MCF 10A (cell line): ENCODE measurements at regions of chr14 and their contacts with region 1.

Region 1: GRCh38 chr14:28751467-28752058 is 15.0 kb upstream of the FOXG1 start:
- DNase-seq: peak; percentile 73
- H3K4me3 Mint-ChIP-seq: no peak overlapping the region
- H3K27ac Mint-ChIP-seq: no peak overlapping the region
- H3K4me1 Mint-ChIP-seq: peaks cover 13% of the 10 kb centered on the region
- H3K27me3 Mint-ChIP-seq: peaks cover 26% of the 10 kb centered on the region
- CTCF ChIP-seq: peak; percentile 46

Region 2: DNA sequence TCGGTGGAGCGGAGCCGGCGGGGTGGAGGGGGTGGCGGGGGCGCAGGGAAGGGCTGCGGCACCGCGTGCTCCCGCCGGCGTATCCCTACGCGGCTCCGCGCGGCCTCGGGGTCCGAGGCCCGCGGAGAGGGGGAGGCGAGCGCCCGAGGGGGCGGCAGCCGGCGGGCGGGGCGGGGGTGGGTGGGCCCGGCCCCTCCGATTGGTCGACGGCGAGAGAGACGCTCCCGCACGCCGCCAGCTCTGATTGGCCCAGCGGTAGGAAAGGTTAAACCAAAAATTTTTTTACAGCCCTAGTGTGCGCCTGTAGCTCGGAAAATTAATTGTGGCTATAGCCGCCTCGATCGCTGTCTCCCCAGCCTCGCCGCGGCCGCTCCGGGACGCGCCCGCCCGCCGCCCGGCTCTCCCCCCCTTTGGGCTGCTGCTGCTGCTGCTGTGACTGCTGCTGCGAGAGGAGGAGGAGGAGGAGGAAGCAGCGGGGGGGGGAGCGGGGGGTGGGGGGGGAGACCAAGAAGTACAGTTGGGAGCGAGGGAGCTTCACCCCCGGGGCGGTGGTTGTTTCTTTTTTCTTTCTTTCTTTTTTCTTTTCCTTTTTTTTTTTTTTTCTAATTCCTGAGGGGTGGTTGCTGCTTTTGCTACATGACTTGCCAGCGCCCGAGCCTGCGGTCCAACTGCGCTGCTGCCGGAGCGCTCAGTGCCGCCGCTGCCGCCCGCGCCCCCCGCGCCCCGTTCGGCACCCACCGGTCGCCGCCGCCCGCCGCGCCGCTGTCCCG is 15.1 kb after region 1 on chr14 and contains the start of gene FOXG1:
- CTCF ChIA-PET with region 1: interaction called, 35 read pairs
- POLR2A ChIA-PET with region 1: no interaction called
- intact Hi-C with region 1: no loop called
- DNase-seq: no peak
- H3K4me3 Mint-ChIP-seq: no peak within 1 kb of the TSS
- H3K27ac Mint-ChIP-seq: no peak within 1 kb of the TSS
- H3K4me1 Mint-ChIP-seq: no peaks in the 10 kb centered on the region
- H3K27me3 Mint-ChIP-seq: peaks cover 83% of the 10 kb centered on the region
- CTCF ChIP-seq: no peak
- total RNA-seq, gene FOXG1: not detected in 2 replicates

Region 3: GRCh38 chr14:29521526-29522137 is 770.1 kb after region 1 on chr14:
- CTCF ChIA-PET with region 1: interaction called, 8 read pairs
- POLR2A ChIA-PET with region 1: no interaction called
- intact Hi-C with region 1: loop called (anchors 1 kb)
- DNase-seq: peak; percentile 37
- H3K4me3 Mint-ChIP-seq: no peak overlapping the region
- H3K27ac Mint-ChIP-seq: no peak overlapping the region
- H3K4me1 Mint-ChIP-seq: no peaks in the 10 kb centered on the region
- H3K27me3 Mint-ChIP-seq: peaks cover 44% of the 10 kb centered on the region
- CTCF ChIP-seq: peak; percentile 40

Region 4: DNA sequence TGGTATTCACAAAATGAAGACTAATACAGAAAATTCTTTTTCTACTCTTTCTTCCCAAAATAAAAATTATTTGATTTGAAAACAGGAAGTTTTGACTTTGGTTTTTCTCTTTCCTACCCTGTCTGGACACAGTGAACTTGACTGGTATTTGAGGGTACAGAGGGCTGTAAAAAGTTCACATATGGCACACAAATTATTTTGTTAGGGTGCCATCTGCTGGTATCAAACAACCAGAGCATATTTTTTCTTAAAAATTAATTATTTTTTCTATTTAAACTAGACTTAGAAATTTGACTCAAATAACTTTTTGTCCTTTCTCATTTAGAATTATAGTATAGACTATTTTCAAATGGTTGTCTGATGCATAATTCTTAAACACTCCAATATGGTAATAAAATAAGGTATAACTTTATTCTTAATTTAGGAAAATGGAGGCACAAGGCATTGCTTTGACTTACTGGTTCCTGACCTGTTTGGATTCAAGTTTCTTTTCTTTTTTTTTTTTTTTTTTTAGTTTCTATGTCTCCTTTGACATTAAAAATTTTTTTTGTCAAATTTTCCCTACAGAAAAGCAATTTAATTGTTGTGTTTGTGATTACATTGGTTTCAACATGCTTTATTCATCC is 785.4 kb after region 1 on chr14:
- CTCF ChIA-PET with region 1: interaction called, 123 read pairs
- POLR2A ChIA-PET with region 1: no interaction called
- intact Hi-C with region 1: loop called (anchors 1 kb)
- DNase-seq: peak; percentile 26
- H3K4me3 Mint-ChIP-seq: no peak overlapping the region
- H3K27ac Mint-ChIP-seq: no peak overlapping the region
- H3K4me1 Mint-ChIP-seq: no peaks in the 10 kb centered on the region
- H3K27me3 Mint-ChIP-seq: peaks cover 44% of the 10 kb centered on the region
- CTCF ChIP-seq: peak; percentile 44

Region 5: GRCh38 chr14:29569194-29569593 is 817.6 kb after region 1 on chr14:
- CTCF ChIA-PET with region 1: no interaction called
- POLR2A ChIA-PET with region 1: no interaction called
- intact Hi-C with region 1: no loop called
- DNase-seq: no peak
- H3K4me3 Mint-ChIP-seq: no peak overlapping the region
- H3K27ac Mint-ChIP-seq: no peak overlapping the region
- H3K4me1 Mint-ChIP-seq: no peaks in the 10 kb centered on the region
- H3K27me3 Mint-ChIP-seq: no peaks in the 10 kb centered on the region
- CTCF ChIP-seq: no peak

Region 6: DNA sequence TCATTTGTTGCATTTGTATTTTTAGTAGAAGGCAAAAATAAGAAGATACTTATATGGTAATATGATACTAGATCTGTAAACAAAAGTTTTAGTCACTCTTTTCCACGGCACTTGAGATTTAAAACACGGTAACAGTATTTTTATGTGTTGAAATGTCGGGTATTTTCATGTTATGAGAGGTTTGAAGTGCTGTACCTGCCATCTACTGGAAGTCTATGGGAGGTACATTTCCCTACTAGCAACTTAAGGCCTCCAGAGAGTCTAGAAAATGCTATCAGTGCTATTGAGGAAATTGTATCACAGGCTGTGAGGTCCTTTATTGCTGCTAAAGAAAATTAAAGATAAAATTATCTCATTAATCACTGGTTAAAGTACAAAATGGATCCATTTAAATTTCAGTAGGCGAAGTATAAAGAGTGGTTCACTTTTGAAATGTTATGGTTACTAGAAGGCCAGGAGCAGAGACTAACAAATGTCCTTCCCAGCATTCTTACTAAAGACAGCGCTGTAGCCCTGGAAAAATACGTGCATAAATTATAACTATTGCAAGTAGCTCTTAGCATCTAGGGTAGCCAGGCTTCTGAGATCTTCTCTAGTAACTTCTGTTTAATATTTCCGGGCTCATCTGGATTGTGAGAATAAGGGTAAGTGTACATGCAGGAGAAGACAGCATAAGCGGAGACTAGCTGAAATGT is 1253.7 kb after region 1 on chr14:
- CTCF ChIA-PET with region 1: interaction called, 4 read pairs
- POLR2A ChIA-PET with region 1: no interaction called
- intact Hi-C with region 1: loop called (anchors 5 kb)
- DNase-seq: peak; percentile 68
- H3K4me3 Mint-ChIP-seq: no peak overlapping the region
- H3K27ac Mint-ChIP-seq: no peak overlapping the region
- H3K4me1 Mint-ChIP-seq: peaks cover 7% of the 10 kb centered on the region
- H3K27me3 Mint-ChIP-seq: no peaks in the 10 kb centered on the region
- CTCF ChIP-seq: peak; percentile 78